Panc1 (cell line): ENCODE measurements at regions of chr3 and their contacts with region 1.

Region 1: GRCh38 chr3:181326637-181327223 is 337.2 kb upstream of the DNAJC19 start:
- DNase-seq: peak; percentile 8
- ATAC-seq: no peak
- H3K4me3 ChIP-seq: no peak overlapping the region
- H3K27ac ChIP-seq: no peak overlapping the region
- H3K4me1 ChIP-seq: no peaks in the 10 kb centered on the region
- H3K27me3 ChIP-seq: no peaks in the 10 kb centered on the region
- CTCF ChIP-seq: peak; percentile 78

Region 2: DNA sequence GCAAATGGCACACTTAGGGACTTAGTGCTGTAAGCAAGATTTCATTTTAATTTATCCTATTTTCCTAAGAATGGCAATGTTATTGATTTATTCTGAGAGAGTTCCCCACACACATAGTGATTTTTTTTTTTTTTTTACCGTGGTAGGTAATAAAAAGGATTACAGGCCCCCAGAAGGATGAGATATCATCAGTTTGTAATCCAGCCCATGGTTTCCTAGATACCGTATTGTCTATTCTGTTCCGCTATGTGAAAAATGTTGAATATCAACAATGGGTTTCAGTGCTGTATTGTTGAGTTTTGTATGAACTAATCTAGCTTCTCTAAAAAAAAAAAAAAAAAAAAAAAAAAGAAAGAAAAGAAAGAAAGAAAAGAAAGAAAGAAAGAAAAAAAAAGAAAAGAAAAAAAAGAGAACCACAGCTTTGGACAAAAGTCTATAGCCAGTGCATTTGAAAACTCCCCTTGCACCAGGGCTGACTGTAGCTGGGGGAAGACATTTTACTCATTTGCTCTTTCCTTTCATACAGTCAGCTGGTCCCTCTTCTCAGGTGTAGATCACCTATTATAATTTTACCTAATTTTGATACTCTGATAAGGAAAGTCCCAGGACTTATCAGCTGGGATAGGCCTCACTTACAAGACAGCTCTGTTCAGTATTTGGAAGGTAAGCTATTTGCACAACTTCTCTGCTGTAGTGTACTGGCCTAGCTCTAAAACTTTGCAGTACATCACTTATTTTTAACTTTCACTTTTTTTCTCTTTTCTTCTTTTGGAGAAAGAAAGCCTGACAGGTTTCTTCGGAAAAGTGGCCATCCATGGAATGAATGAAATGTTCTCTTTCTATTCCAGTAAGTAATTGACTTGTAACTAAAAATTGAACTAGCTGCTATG is 283.6 kb after region 1 on chr3:
- CTCF ChIA-PET with region 1: no interaction called
- POLR2A ChIA-PET with region 1: no interaction called
- in situ Hi-C with region 1: no loop called
- intact Hi-C with region 1: loop called (anchors 10 kb)
- DNase-seq: no peak
- ATAC-seq: no peak
- H3K4me3 ChIP-seq: no peak overlapping the region
- H3K27ac ChIP-seq: no peak overlapping the region
- H3K4me1 ChIP-seq: no peaks in the 10 kb centered on the region
- H3K27me3 ChIP-seq: no peaks in the 10 kb centered on the region
- CTCF ChIP-seq: no peak

Region 3: DNA sequence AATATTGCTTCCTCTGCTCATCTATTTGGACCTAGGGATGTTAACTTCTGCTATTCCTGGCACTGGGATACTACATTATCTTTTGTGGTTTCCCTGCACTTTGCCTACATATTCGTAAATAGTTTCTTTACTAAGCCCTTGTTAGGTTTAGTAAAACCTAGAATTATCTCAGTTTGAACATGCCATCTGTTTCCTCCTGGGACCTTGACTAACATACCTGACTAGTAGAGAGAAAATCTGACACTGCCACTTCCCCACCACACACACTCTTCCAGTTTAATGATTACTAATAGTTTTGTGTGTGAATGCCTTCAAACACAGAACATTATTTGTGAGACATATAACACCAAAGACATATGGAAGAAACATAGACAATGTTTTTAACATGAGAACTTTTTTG is 356.8 kb after region 1 on chr3:
- CTCF ChIA-PET with region 1: no interaction called
- POLR2A ChIA-PET with region 1: no interaction called
- in situ Hi-C with region 1: no loop called
- intact Hi-C with region 1: no loop called
- DNase-seq: no peak
- ATAC-seq: no peak
- H3K4me3 ChIP-seq: no peak overlapping the region
- H3K27ac ChIP-seq: no peak overlapping the region
- H3K4me1 ChIP-seq: no peaks in the 10 kb centered on the region
- H3K27me3 ChIP-seq: no peaks in the 10 kb centered on the region
- CTCF ChIP-seq: no peak